Heart left ventricle (tissue), 16 donors: ENCODE measurements at regions of chr16 and their contacts with region 1.

Region 1: GRCh38 chr16:74309789-74310781 is 13.5 kb downstream of the PSMD7 start:
- DNase-seq: no peak
- ATAC-seq: peak in 2 of 4 donors; percentile 43 to 44
- H3K4me3 ChIP-seq: no peak overlapping the region
- H3K27ac ChIP-seq: no peak overlapping the region
- H3K4me1 ChIP-seq: peaks cover 0 to 18% (median 9%) of the 10 kb centered on the region in 12 donors
- H3K27me3 ChIP-seq: no peaks in the 10 kb centered on the region
- CTCF ChIP-seq: peak; percentile 51 to 83 (median 70)
- POLR2A ChIP-seq: no peak

Region 2: DNA sequence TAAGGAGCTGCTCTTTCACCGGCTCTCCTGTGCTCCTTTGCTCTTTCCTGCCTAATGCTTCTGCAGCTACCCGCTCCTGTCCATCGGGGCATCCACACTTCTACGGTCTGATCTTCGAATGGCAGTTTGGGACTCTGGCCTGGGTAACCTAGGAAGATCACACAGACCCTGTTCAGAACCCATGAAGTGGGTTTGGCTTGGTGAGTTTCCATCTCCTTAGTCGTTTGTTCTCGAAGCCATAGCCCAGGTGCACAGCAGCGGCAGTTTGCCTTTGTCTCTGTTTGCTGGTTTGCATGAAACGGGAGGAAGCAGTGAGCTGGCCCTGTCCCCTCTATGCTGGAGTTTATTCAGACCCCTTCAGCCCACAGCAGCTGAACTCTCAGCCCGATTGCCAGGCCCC is 15.6 kb after region 1 on chr16:
- intact Hi-C with region 1: loop called in 2 of 10 experiments (anchors 2 kb)
- DNase-seq: no peak
- ATAC-seq: no peak
- H3K4me3 ChIP-seq: no peak overlapping the region
- H3K27ac ChIP-seq: no peak overlapping the region
- H3K4me1 ChIP-seq: peaks cover 0 to 34% (median 23%) of the 10 kb centered on the region in 12 donors
- H3K27me3 ChIP-seq: no peaks in the 10 kb centered on the region
- CTCF ChIP-seq: no peak
- POLR2A ChIP-seq: no peak

Region 3: GRCh38 chr16:74431516-74431915 is 121.4 kb after region 1 on chr16:
- intact Hi-C with region 1: loop called in 4 of 10 experiments (anchors 5 to 10 kb)
- DNase-seq: no peak
- ATAC-seq: no peak
- H3K4me3 ChIP-seq: no peak overlapping the region
- H3K27ac ChIP-seq: no peak overlapping the region
- H3K4me1 ChIP-seq: no peaks in the 10 kb centered on the region
- H3K27me3 ChIP-seq: no peaks in the 10 kb centered on the region
- CTCF ChIP-seq: no peak
- POLR2A ChIP-seq: no peak

Region 4: DNA sequence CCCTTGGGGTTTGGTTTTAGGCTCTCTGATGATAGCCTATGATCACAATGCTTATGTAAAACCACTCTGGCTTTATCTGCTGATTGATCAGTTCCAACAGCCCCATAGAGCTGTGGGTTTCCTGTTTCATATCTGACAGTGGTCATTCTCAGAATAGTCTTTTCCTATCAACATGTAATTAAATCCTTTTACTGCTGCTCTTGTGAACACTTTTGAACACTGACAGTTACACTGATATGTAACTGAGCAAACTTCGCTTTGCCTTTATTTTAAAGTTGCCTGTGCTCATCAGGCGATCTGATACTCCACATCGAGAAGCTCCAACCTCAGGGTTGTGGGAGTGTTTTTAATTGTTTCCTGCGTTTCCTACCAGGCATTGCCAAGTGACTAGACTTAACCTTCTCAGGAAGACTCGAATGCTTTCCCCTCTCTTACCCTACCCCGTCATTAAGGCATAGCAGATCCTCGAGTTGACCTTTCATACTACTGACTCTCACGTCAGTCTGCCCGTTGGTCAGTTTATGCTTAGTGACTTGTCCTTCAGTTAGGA is 128.5 kb after region 1 on chr16:
- intact Hi-C with region 1: loop called in 4 of 10 experiments (anchors 5 to 10 kb)
- DNase-seq: no peak
- ATAC-seq: peak in 3 of 4 donors; percentile 26 to 54 (median 29)
- H3K4me3 ChIP-seq: no peak overlapping the region
- H3K27ac ChIP-seq: peak overlapping the region in 1 of 12 donors; percentile 25
- H3K4me1 ChIP-seq: peaks cover 0 to 15% (median 0%) of the 10 kb centered on the region in 12 donors
- H3K27me3 ChIP-seq: no peaks in the 10 kb centered on the region
- CTCF ChIP-seq: no peak
- POLR2A ChIP-seq: no peak